Naive thymus-derived CD4-positive, alpha-beta T cell (primary cell): ENCODE measurements at regions of chr16 and their contacts with region 1.

Region 1: GRCh38 chr16:24041826-24042631 is 206.2 kb downstream of the PRKCB start:
- DNase-seq: peak; percentile 37 to 78 (median 62)
- ATAC-seq: peak; percentile 96
- H3K4me3 ChIP-seq: no peak overlapping the region
- H3K4me3 Mint-ChIP-seq: peak overlapping the region in 1 of 10 donors; percentile 21
- H3K27ac ChIP-seq: no peak overlapping the region
- H3K27ac Mint-ChIP-seq: no peak overlapping the region
- H3K4me1 ChIP-seq: no peaks in the 10 kb centered on the region
- H3K4me1 Mint-ChIP-seq: peaks cover 0 to 24% (median 5%) of the 10 kb centered on the region in 7 donors
- H3K27me3 ChIP-seq: no peaks in the 10 kb centered on the region
- H3K27me3 Mint-ChIP-seq: no peaks in the 10 kb centered on the region

Region 2: GRCh38 chr16:24151482-24151939 is 109.5 kb after region 1 on chr16:
- CTCF ChIA-PET with region 1: no interaction called
- POLR2A ChIA-PET with region 1: no interaction called
- intact Hi-C with region 1: loop called in 1 of 2 experiments (anchors 10 kb)
- DNase-seq: peak in 8 of 9 donors; percentile 24 to 66 (median 58)
- ATAC-seq: peak; percentile 81
- H3K4me3 ChIP-seq: no peak overlapping the region
- H3K4me3 Mint-ChIP-seq: peak overlapping the region; percentile 24 to 90 (median 71)
- H3K27ac ChIP-seq: no peak overlapping the region
- H3K27ac Mint-ChIP-seq: peak overlapping the region; percentile 11 to 81 (median 67)
- H3K4me1 ChIP-seq: peaks cover 0 to 16% of the 10 kb centered on the region in 2 donors
- H3K4me1 Mint-ChIP-seq: peaks cover 25 to 58% (median 51%) of the 10 kb centered on the region in 7 donors
- H3K27me3 ChIP-seq: no peaks in the 10 kb centered on the region
- H3K27me3 Mint-ChIP-seq: no peaks in the 10 kb centered on the region

Region 3: GRCh38 chr16:24504472-24505345 is 462.7 kb after region 1 on chr16:
- CTCF ChIA-PET with region 1: interaction called, 4 read pairs
- POLR2A ChIA-PET with region 1: no interaction called
- intact Hi-C with region 1: loop called in 1 of 2 experiments (anchors 1 kb)
- DNase-seq: peak; percentile 21 to 65 (median 50)
- ATAC-seq: peak; percentile 89
- H3K4me3 ChIP-seq: no peak overlapping the region
- H3K4me3 Mint-ChIP-seq: no peak overlapping the region
- H3K27ac ChIP-seq: no peak overlapping the region
- H3K27ac Mint-ChIP-seq: no peak overlapping the region
- H3K4me1 ChIP-seq: no peaks in the 10 kb centered on the region
- H3K4me1 Mint-ChIP-seq: peaks cover 0 to 4% (median 0%) of the 10 kb centered on the region in 7 donors
- H3K27me3 ChIP-seq: no peaks in the 10 kb centered on the region
- H3K27me3 Mint-ChIP-seq: peaks cover 4 to 17% (median 13%) of the 10 kb centered on the region in 5 donors